Naive thymus-derived CD4-positive, alpha-beta T cell (primary cell): ENCODE measurements at regions of chr4 and their contacts with region 1.

Region 1: DNA sequence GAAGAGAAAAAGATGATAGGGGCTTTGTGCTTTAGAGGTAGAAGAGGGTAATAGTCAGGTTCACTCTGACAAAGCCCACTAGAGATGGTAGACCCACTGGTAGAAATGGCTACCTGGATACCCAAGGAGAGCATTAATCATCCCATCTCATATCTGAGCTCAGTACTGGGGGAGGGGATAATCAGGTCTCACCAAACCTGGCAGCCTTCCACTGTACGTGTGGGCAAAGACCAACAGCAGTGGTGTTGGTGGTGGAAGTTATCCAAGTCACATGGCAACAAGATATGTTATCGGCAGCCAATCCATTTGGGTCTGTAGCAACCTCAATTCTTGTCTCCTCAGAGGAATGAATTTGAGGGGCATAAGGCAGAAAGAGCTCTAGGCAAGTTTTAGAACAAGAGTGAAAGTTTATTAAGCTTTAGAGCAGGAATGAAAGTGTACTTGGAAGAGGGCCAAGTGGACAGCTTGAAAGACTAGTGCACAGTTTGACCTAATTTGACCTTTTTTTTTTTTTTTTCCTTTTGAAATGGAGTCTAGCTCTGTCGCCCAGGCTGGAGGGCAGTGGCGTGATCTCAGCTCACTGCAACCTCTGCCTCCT is 67.0 kb upstream of the CXCL13 start:
- DNase-seq: no peak
- ATAC-seq: no peak
- H3K4me3 ChIP-seq: no peak overlapping the region
- H3K4me3 Mint-ChIP-seq: no peak overlapping the region
- H3K27ac ChIP-seq: no peak overlapping the region
- H3K27ac Mint-ChIP-seq: peak overlapping the region in 1 of 9 donors; percentile 40
- H3K4me1 ChIP-seq: no peaks in the 10 kb centered on the region
- H3K4me1 Mint-ChIP-seq: peaks cover 0 to 19% (median 0%) of the 10 kb centered on the region in 7 donors
- H3K27me3 ChIP-seq: no peaks in the 10 kb centered on the region
- H3K27me3 Mint-ChIP-seq: peaks cover 6 to 32% (median 16%) of the 10 kb centered on the region in 5 donors

Region 2: GRCh38 chr4:77586951-77587383 is 48.3 kb after region 1 on chr4:
- CTCF ChIA-PET with region 1: no interaction called
- POLR2A ChIA-PET with region 1: no interaction called
- intact Hi-C with region 1: loop called in 1 of 2 experiments (anchors 1 kb)
- DNase-seq: peak in 2 of 9 donors; percentile 8 to 64
- ATAC-seq: peak; percentile 89
- H3K4me3 ChIP-seq: no peak overlapping the region
- H3K4me3 Mint-ChIP-seq: peak overlapping the region in 1 of 10 donors; percentile 64
- H3K27ac ChIP-seq: no peak overlapping the region
- H3K27ac Mint-ChIP-seq: peak overlapping the region in 2 of 9 donors; percentile 10 to 75
- H3K4me1 ChIP-seq: no peaks in the 10 kb centered on the region
- H3K4me1 Mint-ChIP-seq: peaks cover 0 to 33% (median 9%) of the 10 kb centered on the region in 7 donors
- H3K27me3 ChIP-seq: no peaks in the 10 kb centered on the region
- H3K27me3 Mint-ChIP-seq: peaks cover 0 to 9% (median 0%) of the 10 kb centered on the region in 5 donors